HEK293 (cell line): ENCODE measurements at regions of chr16 and their contacts with region 1.

Region 1: DNA sequence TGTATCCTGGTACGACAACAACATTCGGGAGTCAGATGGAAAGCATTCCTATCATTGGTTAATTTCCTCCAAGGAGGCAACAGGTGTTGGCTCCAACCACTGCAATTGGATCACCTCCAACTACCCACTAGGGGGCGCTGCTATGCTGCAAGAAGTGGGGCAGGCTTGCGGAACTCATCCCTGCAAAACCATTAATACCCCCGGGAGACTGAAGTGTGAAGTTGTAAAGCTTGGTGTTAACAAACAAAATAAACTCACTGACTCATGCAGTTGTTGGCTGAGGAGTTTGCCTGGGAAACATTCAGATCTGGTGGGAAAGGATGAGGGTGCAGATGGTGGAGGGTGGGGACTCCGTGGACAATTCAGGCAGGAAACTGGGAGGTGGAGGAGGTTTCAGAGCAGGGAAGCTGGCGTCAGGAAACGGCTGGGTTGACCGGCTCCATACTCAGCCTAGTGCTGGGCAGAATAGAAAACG is 84.9 kb downstream of the HS3ST2 start:
- H3K4me3 ChIP-seq: no peak overlapping the region
- H3K27ac ChIP-seq: no peak overlapping the region
- H3K4me1 ChIP-seq: no peaks in the 10 kb centered on the region
- CTCF ChIP-seq: peak; percentile 76

Region 2: GRCh38 chr16:22705799-22706198 is 193.1 kb before region 1 on chr16:
- CTCF ChIA-PET with region 1: no interaction called
- POLR2A ChIA-PET with region 1: no interaction called
- H3K4me3 ChIP-seq: no peak overlapping the region
- H3K27ac ChIP-seq: no peak overlapping the region
- H3K4me1 ChIP-seq: no peaks in the 10 kb centered on the region
- CTCF ChIP-seq: no peak

Region 3: DNA sequence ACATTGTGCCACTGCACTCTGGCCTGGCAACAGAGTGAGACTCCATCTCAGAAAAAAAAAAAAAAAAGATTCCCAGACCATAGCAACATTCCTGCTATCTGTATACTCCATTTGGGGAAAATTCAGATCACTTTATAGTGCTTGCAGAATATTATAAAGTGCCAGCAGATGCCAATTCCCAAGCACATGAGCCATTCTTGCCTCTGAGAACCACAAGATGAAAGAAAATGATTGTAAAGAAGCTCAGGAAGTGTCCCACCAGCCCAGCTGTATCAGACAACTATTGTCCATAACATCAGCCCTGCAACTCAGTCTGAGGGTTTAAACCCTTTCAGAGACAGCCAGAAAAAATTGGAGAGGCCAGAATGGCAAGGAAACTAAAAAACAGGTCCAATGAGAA is 15.9 kb before region 1 on chr16:
- CTCF ChIA-PET with region 1: interaction called, 10 read pairs
- POLR2A ChIA-PET with region 1: no interaction called
- H3K4me3 ChIP-seq: no peak overlapping the region
- H3K27ac ChIP-seq: no peak overlapping the region
- H3K4me1 ChIP-seq: no peaks in the 10 kb centered on the region
- CTCF ChIP-seq: no peak

Region 4: GRCh38 chr16:23055486-23055885 is 156.6 kb after region 1 on chr16:
- CTCF ChIA-PET with region 1: interaction called, 10 read pairs
- POLR2A ChIA-PET with region 1: no interaction called
- H3K4me3 ChIP-seq: no peak overlapping the region
- H3K27ac ChIP-seq: no peak overlapping the region
- H3K4me1 ChIP-seq: no peaks in the 10 kb centered on the region
- CTCF ChIP-seq: no peak